IMR-90 (cell line): ENCODE measurements at regions of chr11 and their contacts with region 1.

Region 1: DNA sequence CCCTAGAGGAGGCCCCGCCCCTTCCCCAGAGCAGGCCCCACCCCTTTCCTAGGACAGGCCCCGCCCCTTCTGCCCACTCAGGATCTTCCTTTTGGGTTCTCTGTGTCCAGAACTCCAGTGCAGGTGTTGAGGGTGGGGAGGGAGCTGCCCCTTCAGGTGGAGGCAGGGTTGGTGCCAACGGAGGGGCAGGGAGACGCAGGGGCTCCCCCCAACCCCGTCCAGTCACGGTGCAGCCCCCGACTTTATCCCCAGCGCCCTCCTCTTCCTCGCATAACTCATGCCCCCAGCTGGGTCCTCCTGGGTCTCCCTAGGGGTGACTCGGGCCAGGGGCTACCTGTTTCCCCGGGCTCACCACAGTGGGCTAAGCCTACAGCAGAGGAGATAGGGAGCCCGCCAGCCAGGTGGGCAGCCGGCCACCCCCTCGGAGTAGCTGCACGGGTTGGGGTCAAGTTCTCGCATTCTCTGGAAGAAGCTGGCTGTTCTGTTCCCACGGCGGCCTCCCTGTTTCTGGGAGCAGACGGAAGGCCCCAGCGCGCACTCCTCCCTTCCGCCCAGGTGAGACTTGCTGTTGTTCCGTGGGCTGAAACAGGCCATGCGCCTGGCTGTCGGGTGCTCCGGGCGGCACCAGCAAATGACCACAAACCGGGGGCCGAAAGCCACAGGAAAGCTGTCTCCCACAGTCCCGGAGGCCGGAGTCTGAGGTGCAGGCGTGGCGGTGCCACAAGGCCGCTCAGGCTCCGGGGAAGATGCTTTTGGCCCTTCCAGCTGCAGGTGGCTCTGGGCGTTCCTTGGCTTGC is 38.9 kb downstream of the MUC2 start:
- DNase-seq: no peak
- ATAC-seq: no peak
- H3K4me3 ChIP-seq: no peak overlapping the region
- H3K27ac ChIP-seq: no peak overlapping the region
- H3K4me1 ChIP-seq: no peaks in the 10 kb centered on the region
- H3K27me3 ChIP-seq: peaks cover 10% of the 10 kb centered on the region; the same call in 1 of the 2 replicates
- CTCF ChIP-seq: no peak
- POLR2A ChIP-seq: no peak
- RAD21 ChIP-seq: no peak

Region 2: DNA sequence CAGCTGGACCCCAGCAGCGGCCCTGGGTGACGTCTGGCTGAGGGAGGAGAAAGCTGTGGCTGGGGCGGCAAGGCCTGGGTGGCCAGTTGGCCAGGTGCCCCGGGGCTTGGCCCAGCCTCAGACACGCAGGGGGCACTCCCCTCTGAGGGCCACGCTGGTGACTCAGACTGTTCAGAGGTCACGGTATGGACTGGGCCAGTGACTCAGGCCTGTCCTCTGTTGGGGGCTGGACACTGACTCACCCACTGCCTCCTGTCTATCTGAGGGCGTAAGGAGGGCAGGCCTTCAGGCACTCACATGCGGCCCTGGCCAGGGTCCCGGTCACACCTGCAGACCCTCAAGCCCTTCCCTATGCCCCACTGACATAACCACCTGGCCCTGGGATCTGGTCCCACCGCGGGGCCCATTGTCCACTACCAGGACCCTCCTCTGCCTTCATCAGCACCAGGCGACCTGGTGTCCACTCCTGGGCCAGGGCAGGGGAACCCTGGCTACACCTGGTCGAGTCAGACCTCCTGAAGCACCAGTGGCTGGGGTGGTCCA is 40.4 kb after region 1 on chr11:
- CTCF ChIA-PET with region 1: no interaction called
- POLR2A ChIA-PET with region 1: no interaction called
- dilution Hi-C with region 1: no loop called
- in situ Hi-C with region 1: no loop called
- intact Hi-C with region 1: no loop called
- DNase-seq: peak; percentile 97
- ATAC-seq: peak; percentile 95
- H3K4me3 ChIP-seq: no peak overlapping the region
- H3K27ac ChIP-seq: peak overlapping the region; percentile 80
- H3K4me1 ChIP-seq: peaks cover 38% of the 10 kb centered on the region
- H3K27me3 ChIP-seq: no peaks in the 10 kb centered on the region; the same call in 1 of the 2 replicates
- CTCF ChIP-seq: no peak
- POLR2A ChIP-seq: no peak
- RAD21 ChIP-seq: no peak

Region 3: DNA sequence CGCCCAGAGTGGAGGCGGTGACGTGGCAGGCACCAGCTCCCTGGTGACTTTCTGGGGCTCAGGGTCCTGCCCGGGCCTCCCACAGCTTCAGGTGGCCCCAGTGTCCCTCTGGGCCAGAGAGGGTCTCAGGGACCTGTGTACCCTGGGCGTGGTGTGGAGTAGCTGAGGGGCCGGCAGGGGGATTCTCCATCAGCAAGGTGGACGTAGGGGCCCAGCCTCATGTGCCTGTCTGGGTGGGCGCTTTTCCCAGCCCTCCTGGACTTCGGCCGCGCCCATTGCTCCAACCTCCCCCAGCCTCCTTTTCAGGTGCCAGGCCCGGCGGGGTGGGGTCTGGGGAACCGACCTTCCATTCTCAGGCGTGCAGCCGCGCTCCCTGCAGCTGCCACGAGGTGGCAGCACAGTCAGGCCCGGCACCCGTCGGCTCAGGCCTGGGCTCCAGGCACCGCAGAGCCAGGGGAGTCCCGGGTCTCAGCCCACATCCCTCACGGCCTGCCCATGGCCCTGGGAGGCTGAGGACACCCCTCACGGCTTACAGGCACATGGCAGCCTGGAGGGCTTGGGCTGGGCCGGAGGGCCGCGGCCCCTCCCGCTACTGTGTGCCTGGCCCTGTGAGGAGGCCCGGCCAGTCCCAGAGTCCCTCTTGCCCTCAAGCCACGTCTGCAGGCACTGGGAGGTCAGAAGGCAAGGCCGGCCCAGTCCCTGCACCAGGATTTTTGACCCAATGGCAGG is 89.3 kb after region 1 on chr11:
- CTCF ChIA-PET with region 1: no interaction called
- POLR2A ChIA-PET with region 1: no interaction called
- dilution Hi-C with region 1: no loop called
- in situ Hi-C with region 1: no loop called
- intact Hi-C with region 1: loop called (anchors 2 kb)
- DNase-seq: peak; percentile 12
- ATAC-seq: peak; percentile 97
- H3K4me3 ChIP-seq: no peak overlapping the region
- H3K27ac ChIP-seq: no peak overlapping the region
- H3K4me1 ChIP-seq: no peaks in the 10 kb centered on the region
- H3K27me3 ChIP-seq: peaks cover 16% of the 10 kb centered on the region; the same call in 1 of the 2 replicates
- CTCF ChIP-seq: peak; percentile 86
- POLR2A ChIP-seq: no peak
- RAD21 ChIP-seq: peak; percentile 84

Region 4: DNA sequence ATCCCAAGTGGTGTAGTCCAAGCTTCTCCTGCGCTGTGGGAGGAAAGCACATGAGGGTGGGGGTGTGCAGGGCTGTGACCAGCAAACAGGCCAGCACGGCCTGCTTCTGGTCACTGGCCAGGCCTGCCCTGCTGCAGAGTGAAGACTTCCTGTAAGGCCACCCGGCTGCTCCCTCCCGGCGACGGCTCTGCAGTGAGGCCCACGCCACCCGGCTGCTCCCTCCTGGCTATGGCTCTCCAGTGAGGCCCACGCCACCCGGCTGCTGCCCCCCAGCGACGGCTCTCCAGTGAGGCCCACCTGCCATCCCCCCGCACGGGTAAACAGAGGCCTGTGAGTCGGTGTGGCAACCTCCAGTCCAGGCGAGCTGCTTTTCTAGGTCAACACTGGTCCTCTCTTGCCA is 244.7 kb after region 1 on chr11:
- CTCF ChIA-PET with region 1: no interaction called
- POLR2A ChIA-PET with region 1: no interaction called
- dilution Hi-C with region 1: no loop called
- in situ Hi-C with region 1: no loop called
- intact Hi-C with region 1: no loop called
- DNase-seq: peak; percentile 7
- ATAC-seq: peak; percentile 75
- H3K4me3 ChIP-seq: no peak overlapping the region
- H3K27ac ChIP-seq: no peak overlapping the region
- H3K4me1 ChIP-seq: peaks cover 5% of the 10 kb centered on the region
- H3K27me3 ChIP-seq: peaks cover 22% of the 10 kb centered on the region
- CTCF ChIP-seq: no peak
- POLR2A ChIP-seq: no peak
- RAD21 ChIP-seq: no peak